ENCODE measurements at regions of chr22 and their contacts with region 1.

Region 1: GRCh38 chr22:30386960-30387827 is at the start of gene RNF215:
- DNase-seq: peak; percentile 80 to 97 (median 87)
- ATAC-seq: peak; percentile 97
- H3K4me3 ChIP-seq: peak within 1 kb of the TSS; percentile 50 to 51
- H3K27ac ChIP-seq: peak within 1 kb of the TSS in 1 of 2 donors; percentile 26
- H3K4me1 ChIP-seq: peaks cover 8 to 16% of the 10 kb centered on the region in 2 donors
- H3K27me3 ChIP-seq: no peaks in the 10 kb centered on the region
- CTCF ChIP-seq: peak; percentile 97
- polyA plus RNA-seq, gene RNF215: 20.3 to 27.5 (median 24.5) TPM

Region 2: DNA sequence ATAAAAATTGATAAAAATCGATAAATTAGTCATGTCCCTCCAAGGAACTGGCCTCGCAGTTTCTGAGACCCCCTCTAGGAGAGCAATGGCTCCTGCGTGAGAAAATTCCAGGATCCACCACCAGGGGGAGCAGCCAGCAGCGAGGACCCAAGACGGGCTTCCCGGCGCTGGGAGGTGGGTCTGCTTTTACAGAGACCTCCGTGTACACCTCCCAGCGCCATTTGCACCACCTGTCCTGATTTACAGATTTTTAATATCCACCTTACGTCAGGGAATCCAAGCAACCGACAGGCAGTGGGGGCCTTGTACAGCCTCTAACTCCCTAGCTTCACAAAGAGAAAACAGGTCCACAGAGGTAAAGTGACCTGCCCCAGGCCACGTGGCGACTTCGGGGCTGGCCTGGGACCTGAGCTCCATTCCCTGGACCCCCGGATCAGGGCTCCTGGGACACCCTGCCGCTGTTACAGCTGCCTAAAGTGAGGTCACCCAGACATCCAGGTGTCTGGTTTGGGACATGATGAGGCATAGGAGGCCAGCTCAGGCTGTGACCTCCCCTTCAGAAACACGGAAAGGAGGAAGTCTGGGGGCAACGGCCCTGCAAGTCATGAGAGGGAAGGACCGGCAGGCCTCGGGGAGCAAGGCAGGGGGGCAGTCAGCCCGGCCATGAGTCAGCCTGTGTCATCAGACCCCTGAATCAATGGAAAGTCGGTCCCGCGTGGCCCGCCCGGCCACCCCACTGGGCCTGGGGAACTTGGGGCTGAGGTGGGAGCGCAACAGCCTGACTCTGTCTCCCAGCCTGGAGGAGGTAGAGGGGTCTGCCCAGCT is 124.1 kb before region 1 on chr22:
- intact Hi-C with region 1: loop called (anchors 5 to 10 kb)
- DNase-seq: peak in 3 of 4 donors; percentile 77 to 91 (median 83)
- ATAC-seq: peak; percentile 54
- H3K4me3 ChIP-seq: peak overlapping the region in 1 of 2 donors; percentile 28
- H3K27ac ChIP-seq: peak overlapping the region in 1 of 2 donors; percentile 76
- H3K4me1 ChIP-seq: peaks cover 0 to 60% of the 10 kb centered on the region in 2 donors
- H3K27me3 ChIP-seq: no peaks in the 10 kb centered on the region
- CTCF ChIP-seq: peak; percentile 90 to 99

Region 3: GRCh38 chr22:30289134-30289979 is 97.8 kb before region 1 on chr22 and contains the start of gene CASTOR1:
- intact Hi-C with region 1: loop called (anchors 5 to 10 kb)
- DNase-seq: peak; percentile 95 to 99 (median 99)
- ATAC-seq: peak; percentile 89
- H3K4me3 ChIP-seq: peak within 1 kb of the TSS; percentile 89 to 96
- H3K27ac ChIP-seq: peak within 1 kb of the TSS; percentile 87 to 88
- H3K4me1 ChIP-seq: peaks cover 31 to 57% of the 10 kb centered on the region in 2 donors
- H3K27me3 ChIP-seq: no peaks in the 10 kb centered on the region
- CTCF ChIP-seq: no peak
- polyA plus RNA-seq, gene CASTOR1: 10.7 to 16.7 (median 15.9) TPM

Region 4: GRCh38 chr22:30562366-30562765 is 175.2 kb after region 1 on chr22:
- intact Hi-C with region 1: no loop called
- DNase-seq: no peak
- ATAC-seq: no peak
- H3K4me3 ChIP-seq: no peak overlapping the region
- H3K27ac ChIP-seq: no peak overlapping the region
- H3K4me1 ChIP-seq: no peaks in the 10 kb centered on the region
- H3K27me3 ChIP-seq: peaks cover 0 to 3% of the 10 kb centered on the region in 2 donors
- CTCF ChIP-seq: no peak

Region 5: DNA sequence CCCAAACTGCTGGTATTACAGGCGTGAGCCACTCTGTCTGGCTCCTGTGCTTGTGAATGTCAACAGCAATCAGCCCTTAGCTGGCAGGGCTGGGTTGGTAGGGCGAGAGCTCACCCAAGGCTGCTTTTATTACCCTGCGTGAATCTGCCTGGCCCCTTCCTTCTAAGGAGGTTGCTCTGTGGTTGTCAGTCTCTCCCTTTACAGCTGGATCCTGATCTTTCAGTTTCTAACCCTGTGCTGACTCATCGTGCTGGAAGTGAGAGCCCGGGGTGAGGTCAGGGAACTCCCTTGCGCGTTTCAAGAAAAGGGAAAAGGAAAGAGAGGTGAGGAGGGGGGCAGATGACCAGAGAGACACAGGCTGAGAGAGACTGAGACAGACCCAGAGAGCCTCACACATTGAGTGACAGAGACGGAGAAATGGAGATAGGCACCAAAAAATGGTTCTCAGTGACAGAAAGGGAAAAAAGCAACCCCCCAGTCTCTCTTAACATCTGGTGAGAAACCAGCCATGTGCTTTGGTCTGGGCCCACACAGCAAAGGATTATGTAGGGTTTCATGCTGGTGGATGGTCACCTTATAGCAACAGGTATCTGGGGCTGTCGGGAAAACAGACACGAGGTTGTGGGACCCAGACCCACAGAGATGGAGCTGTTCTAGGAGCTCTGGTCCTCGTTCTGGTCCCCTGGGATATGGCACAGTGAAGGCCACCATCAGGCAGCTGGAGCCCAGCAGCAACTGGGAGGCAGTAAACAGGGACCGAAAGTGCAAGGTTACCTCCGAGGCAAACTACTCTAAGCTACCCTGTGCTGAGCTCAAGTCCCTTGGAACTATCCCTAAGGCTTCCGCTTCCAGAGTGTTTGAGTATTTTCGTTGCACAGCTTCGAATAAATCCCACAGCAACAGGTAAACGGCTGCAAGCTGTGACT is 222.3 kb after region 1 on chr22:
- intact Hi-C with region 1: no loop called
- DNase-seq: peak in 1 of 4 donors; percentile 67
- ATAC-seq: peak; percentile 45
- H3K4me3 ChIP-seq: no peak overlapping the region
- H3K27ac ChIP-seq: peak overlapping the region; percentile 59 to 75
- H3K4me1 ChIP-seq: peaks cover 21 to 50% of the 10 kb centered on the region in 2 donors
- H3K27me3 ChIP-seq: no peaks in the 10 kb centered on the region
- CTCF ChIP-seq: no peak

Measured in left lung (tissue), 14 donors.